ENCODE measurements at regions of chr11 and their contacts with region 1.

Region 1: GRCh38 chr11:63974259-63975143 is at the start of gene COX8A:
- DNase-seq: peak; percentile 98
- H3K4me3 Mint-ChIP-seq: peak within 1 kb of the TSS; percentile 100
- H3K27ac Mint-ChIP-seq: peak within 1 kb of the TSS; percentile 98
- H3K4me1 Mint-ChIP-seq: peaks cover 21% of the 10 kb centered on the region
- H3K27me3 Mint-ChIP-seq: no peaks in the 10 kb centered on the region
- total RNA-seq, gene COX8A: 559 to 581 TPM

Region 2: DNA sequence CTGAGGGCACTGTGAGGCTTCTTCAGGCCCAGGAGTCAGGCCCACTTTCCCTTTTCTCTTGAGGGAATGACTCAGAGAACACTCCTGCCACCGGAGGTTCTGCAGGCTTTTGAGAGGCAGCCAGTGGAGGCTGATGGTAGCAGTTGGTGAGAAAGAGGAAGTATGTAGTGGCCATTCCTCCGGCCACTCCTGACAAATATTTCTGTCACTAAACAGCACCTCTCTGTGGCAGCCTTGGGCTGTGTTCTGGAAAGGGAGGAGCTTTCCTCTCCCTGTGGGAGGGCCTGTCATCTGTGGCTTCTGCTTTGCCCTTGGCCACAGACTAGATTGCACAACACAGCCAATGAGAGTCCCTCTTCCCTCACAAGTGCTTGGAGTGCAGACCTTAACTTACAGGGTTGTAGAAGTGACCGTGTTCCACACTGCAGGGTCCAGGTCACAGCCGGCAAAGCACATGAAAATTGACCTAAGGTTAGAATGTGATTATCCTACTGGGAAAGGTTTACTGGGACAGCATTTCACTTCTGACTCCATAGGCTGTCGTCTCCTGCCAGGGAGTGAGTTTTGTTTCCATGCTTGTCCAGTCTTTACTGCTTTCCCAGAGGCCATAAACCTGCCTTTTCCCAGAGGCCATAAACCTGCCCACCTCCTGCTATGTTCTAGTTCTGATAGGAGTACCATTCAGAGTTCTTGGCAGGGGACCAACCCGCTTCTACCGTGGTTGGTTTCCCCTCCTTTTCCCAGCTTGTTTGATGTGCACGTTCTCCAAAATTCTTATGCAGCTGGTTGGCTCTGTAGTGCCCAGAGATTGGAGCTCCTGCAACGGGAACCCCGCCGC is 102.3 kb before region 1 on chr11:
- CTCF ChIA-PET with region 1: no interaction called
- POLR2A ChIA-PET with region 1: no interaction called
- intact Hi-C with region 1: no loop called
- DNase-seq: peak; percentile 57
- H3K4me3 Mint-ChIP-seq: no peak overlapping the region
- H3K27ac Mint-ChIP-seq: no peak overlapping the region
- H3K4me1 Mint-ChIP-seq: peaks cover 71% of the 10 kb centered on the region
- H3K27me3 Mint-ChIP-seq: no peaks in the 10 kb centered on the region

Region 3: DNA sequence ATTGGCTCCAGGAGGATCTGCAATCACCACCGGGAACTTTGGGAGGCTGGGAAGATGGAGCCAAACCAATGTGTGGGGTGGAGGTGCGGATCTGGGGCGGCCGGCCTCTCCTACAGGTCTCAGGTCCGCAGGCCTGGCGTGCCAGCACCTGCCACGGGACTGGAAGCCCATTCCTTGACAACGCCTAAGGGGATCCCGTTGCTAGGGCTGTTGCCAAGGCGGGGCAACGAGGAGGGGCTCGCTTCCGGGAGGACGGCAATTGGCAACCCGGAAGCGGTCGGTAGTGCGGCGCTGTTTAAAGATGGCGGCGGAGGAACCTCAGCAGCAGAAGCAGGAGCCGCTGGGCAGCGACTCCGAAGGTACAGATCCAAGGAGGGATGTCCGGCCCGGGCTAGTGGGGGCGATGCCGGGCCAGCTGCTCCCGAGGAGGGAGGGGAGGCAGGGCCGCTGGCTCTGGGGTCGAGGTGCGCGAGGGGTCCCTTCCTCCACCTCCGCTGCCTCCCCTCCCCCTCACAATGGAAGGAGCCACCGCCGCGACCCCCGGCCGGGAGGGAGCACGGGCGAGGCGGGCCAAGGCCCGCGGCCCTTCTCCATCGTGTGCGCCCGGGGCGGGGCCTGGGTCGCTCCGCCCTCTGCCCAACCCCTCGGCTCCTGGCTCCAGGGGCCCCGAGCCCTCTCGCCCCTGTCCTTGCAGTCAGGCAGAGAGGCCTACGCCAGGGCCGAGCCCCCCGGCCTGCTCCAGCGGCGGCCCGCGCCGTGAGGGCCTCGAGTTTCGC is 11.8 kb after region 1 on chr11 and contains the start of gene OTUB1:
- CTCF ChIA-PET with region 1: interaction called, 3 read pairs
- POLR2A ChIA-PET with region 1: interaction called, 9 read pairs
- intact Hi-C with region 1: loop called (anchors 1 kb)
- DNase-seq: peak; percentile 93
- H3K4me3 Mint-ChIP-seq: peak within 1 kb of the TSS; percentile 94
- H3K27ac Mint-ChIP-seq: peak within 1 kb of the TSS; percentile 91
- H3K4me1 Mint-ChIP-seq: peaks cover 20% of the 10 kb centered on the region
- H3K27me3 Mint-ChIP-seq: no peaks in the 10 kb centered on the region
- total RNA-seq, gene OTUB1: 69.5 to 72.2 TPM